Adrenal gland (tissue), 19 donors: ENCODE measurements at regions of chr3 and their contacts with region 1.

Region 1: GRCh38 chr3:32177702-32178198 is 60.7 kb upstream of the CMTM8 start:
- DNase-seq: peak; percentile 62 to 91 (median 84)
- H3K4me3 ChIP-seq: no peak overlapping the region
- H3K27ac ChIP-seq: peak overlapping the region in 1 of 5 donors; percentile 30
- H3K4me1 ChIP-seq: no peaks in the 10 kb centered on the region
- H3K27me3 ChIP-seq: no peaks in the 10 kb centered on the region
- CTCF ChIP-seq: peak; percentile 68 to 96 (median 88)
- POLR2A ChIP-seq: no peak

Region 2: DNA sequence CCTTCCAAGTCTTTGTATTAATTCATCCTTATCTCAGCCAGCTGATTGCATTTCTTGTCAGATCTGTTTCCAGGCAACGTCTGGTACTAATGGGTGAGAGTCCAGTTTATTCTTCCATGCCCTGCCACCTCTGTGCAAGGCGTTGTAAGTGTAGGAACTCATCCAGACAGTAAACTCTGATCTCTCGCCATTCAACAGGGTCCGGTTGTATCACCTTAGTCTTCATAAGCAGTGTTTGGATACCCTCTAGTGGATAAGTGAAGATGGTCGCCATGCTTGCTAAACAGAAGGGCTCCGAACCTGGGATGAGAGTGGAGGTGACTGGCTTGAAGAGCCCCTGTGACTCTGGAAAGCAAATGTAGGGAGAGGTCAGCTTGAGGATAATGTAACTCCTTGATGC is 162.3 kb after region 1 on chr3:
- intact Hi-C with region 1: loop called (anchors 5 to 10 kb)
- DNase-seq: peak; percentile 26 to 61 (median 34)
- H3K4me3 ChIP-seq: no peak overlapping the region
- H3K27ac ChIP-seq: no peak overlapping the region
- H3K4me1 ChIP-seq: no peaks in the 10 kb centered on the region
- H3K27me3 ChIP-seq: no peaks in the 10 kb centered on the region
- CTCF ChIP-seq: peak; percentile 18 to 74 (median 62)
- POLR2A ChIP-seq: no peak

Region 3: GRCh38 chr3:32544894-32545293 is 367.1 kb after region 1 on chr3:
- intact Hi-C with region 1: no loop called
- DNase-seq: no peak
- H3K4me3 ChIP-seq: no peak overlapping the region
- H3K27ac ChIP-seq: no peak overlapping the region
- H3K4me1 ChIP-seq: peaks cover 0 to 6% of the 10 kb centered on the region in 2 donors
- H3K27me3 ChIP-seq: no peaks in the 10 kb centered on the region
- CTCF ChIP-seq: no peak
- POLR2A ChIP-seq: no peak